Esophagus muscularis mucosa (tissue), 4 donors: ENCODE measurements at regions of chr5 and their contacts with region 1.

Region 1: DNA sequence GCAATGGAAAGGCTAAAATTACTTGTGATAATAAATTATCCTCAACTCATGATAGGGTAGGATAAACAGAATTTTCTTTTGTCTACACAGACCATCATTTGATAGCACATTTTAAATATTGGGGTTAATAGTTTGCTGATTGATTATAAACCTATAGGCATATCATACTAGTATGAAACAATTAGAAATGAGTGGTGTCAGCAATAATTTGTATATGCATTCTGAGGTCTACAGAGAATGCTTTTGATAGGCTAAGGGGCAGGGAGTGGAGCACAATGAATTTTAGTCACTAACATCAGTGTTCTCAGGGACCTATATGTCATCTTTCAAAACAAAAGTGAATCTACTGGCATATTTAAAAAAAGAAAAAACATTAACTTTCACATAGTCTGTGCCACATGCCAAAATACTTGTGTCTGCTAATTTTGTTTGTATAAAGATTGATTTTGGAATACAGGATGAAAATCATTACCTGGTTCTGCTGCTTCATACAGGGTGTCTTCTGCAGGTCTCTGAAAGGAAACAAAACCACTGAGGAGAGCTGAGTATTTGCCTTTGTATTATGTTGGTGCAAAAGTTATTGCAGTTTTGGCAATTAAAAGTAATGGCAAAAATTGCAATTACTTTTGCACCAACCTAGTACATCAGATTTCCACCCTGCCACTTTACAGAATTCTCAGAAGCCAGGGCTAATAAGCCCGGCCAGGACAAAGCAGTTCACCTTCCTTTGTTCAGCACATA is 27.9 kb upstream of the NADK2 start:
- DNase-seq: no peak
- H3K4me3 ChIP-seq: no peak overlapping the region
- H3K27ac ChIP-seq: no peak overlapping the region
- H3K4me1 ChIP-seq: peaks cover 0 to 10% (median 2%) of the 10 kb centered on the region in 4 donors
- H3K27me3 ChIP-seq: no peaks in the 10 kb centered on the region
- CTCF ChIP-seq: no peak
- EP300 ChIP-seq: no peak
- POLR2A ChIP-seq: no peak

Region 2: DNA sequence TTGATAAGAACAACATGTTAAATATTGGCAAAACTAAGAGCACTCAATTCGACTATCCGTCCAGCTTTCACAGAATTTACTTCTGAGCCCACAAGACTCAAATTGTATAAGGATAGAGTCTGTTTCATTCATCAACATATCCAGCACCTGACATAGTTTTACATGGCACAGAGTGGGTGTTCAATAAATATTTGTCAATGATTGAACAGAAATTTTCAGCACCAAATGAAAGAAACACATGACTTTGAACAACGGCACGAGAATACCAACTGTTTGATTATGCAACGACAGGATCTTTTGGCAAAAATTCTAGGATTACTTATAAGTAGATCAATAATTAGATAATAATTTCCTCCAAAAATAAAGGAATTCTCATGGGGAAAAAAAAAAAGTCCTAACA is 75.9 kb before region 1 on chr5:
- intact Hi-C with region 1: no loop called
- DNase-seq: no peak
- H3K4me3 ChIP-seq: no peak overlapping the region
- H3K27ac ChIP-seq: no peak overlapping the region
- H3K4me1 ChIP-seq: no peaks in the 10 kb centered on the region
- H3K27me3 ChIP-seq: no peaks in the 10 kb centered on the region
- CTCF ChIP-seq: no peak
- EP300 ChIP-seq: no peak
- POLR2A ChIP-seq: no peak

Region 3: GRCh38 chr5:36397901-36398536 is 128.4 kb after region 1 on chr5:
- intact Hi-C with region 1: loop called (anchors 5 kb)
- DNase-seq: no peak
- H3K4me3 ChIP-seq: no peak overlapping the region
- H3K27ac ChIP-seq: no peak overlapping the region
- H3K4me1 ChIP-seq: peaks cover 0 to 13% (median 12%) of the 10 kb centered on the region in 4 donors
- H3K27me3 ChIP-seq: no peaks in the 10 kb centered on the region
- CTCF ChIP-seq: peak; percentile 51 to 63 (median 58)
- EP300 ChIP-seq: no peak
- POLR2A ChIP-seq: no peak